ENCODE measurements at regions of chrX and their contacts with region 1.

Region 1: GRCh38 chrX:20382518-20383297 is 116.0 kb upstream of the RPS6KA3 start:
- DNase-seq: peak; percentile 25
- H3K4me3 Mint-ChIP-seq: no peak overlapping the region
- H3K27ac Mint-ChIP-seq: no peak overlapping the region
- H3K4me1 Mint-ChIP-seq: peaks cover 23% of the 10 kb centered on the region
- H3K27me3 Mint-ChIP-seq: no peaks in the 10 kb centered on the region

Region 2: GRCh38 chrX:19893711-19894110 is 489.0 kb before region 1 on chrX:
- CTCF ChIA-PET with region 1: no interaction called
- intact Hi-C with region 1: no loop called
- DNase-seq: no peak
- H3K4me3 Mint-ChIP-seq: no peak overlapping the region
- H3K27ac Mint-ChIP-seq: no peak overlapping the region
- H3K4me1 Mint-ChIP-seq: peaks cover 12% of the 10 kb centered on the region
- H3K27me3 Mint-ChIP-seq: no peaks in the 10 kb centered on the region

Region 3: DNA sequence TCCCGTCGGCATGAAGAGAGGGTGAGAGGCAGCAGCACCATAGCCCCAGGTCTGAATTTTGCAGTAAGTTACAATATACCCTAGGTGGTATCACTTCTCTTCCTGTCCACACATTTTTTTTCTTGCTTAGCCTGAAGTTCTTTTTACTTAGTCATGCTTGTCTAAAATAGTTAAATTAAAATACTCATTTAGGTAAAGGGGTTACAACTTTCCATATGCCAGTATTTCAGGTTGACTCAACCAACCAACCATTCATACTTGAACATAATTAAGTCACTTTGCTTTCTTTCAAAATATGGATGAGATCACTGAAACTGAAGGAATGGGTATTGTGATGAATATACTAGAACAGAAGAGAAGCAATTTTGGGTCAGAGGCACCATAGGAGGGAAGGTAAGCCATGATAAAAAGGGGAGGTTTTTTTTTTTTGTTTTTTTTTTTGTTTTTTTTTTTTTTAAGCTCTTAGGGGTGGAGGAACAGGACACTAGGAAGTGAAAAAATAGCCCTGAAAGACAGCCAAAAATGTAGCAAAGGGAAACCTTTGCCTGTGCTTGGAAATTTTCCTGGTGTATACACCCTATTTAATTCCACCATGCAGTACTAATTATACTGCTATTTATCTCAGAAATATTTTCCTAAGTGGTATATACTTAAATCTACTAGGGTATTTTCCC is 157.8 kb before region 1 on chrX:
- CTCF ChIA-PET with region 1: no interaction called
- intact Hi-C with region 1: loop called (anchors 1 kb)
- DNase-seq: no peak
- H3K4me3 Mint-ChIP-seq: no peak overlapping the region
- H3K27ac Mint-ChIP-seq: no peak overlapping the region
- H3K4me1 Mint-ChIP-seq: peaks cover 37% of the 10 kb centered on the region
- H3K27me3 Mint-ChIP-seq: no peaks in the 10 kb centered on the region

Region 4: GRCh38 chrX:20333672-20334071 is 49.0 kb before region 1 on chrX:
- CTCF ChIA-PET with region 1: interaction called, 5 read pairs
- intact Hi-C with region 1: loop called (anchors 5 kb)
- DNase-seq: peak; percentile 63
- H3K4me3 Mint-ChIP-seq: no peak overlapping the region
- H3K27ac Mint-ChIP-seq: no peak overlapping the region
- H3K4me1 Mint-ChIP-seq: peaks cover 24% of the 10 kb centered on the region
- H3K27me3 Mint-ChIP-seq: no peaks in the 10 kb centered on the region

Region 5: GRCh38 chrX:20372533-20372932 is 10.2 kb before region 1 on chrX:
- CTCF ChIA-PET with region 1: no interaction called
- intact Hi-C with region 1: no loop called
- DNase-seq: no peak
- H3K4me3 Mint-ChIP-seq: no peak overlapping the region
- H3K27ac Mint-ChIP-seq: no peak overlapping the region
- H3K4me1 Mint-ChIP-seq: peaks cover 16% of the 10 kb centered on the region
- H3K27me3 Mint-ChIP-seq: no peaks in the 10 kb centered on the region

Region 6: DNA sequence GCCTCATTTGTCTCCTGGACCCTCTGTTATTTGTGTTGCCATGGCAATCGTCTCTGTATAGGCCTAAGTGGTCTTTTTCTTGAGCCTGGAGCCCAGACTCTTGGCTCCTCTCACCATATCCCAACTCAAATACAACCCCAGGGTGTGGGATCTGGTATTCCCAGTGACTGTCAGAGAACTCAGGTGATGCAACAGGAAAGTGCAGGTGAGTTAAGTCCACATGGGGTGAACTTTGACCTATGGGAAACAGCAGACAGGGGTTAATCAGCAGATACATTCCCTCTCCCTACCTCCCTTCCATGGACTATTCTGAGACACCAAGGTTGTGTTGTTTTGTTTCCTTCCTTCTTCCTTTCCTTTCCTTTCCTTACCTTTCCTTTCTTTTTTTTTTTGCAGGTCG is 14.9 kb after region 1 on chrX:
- CTCF ChIA-PET with region 1: no interaction called
- intact Hi-C with region 1: loop called (anchors 1 kb)
- DNase-seq: no peak
- H3K4me3 Mint-ChIP-seq: no peak overlapping the region
- H3K27ac Mint-ChIP-seq: no peak overlapping the region
- H3K4me1 Mint-ChIP-seq: peaks cover 15% of the 10 kb centered on the region
- H3K27me3 Mint-ChIP-seq: no peaks in the 10 kb centered on the region

Region 7: GRCh38 chrX:20442597-20442996 is 59.9 kb after region 1 on chrX:
- CTCF ChIA-PET with region 1: no interaction called
- intact Hi-C with region 1: loop called (anchors 1 kb)
- DNase-seq: peak; percentile 91
- H3K4me3 Mint-ChIP-seq: no peak overlapping the region
- H3K27ac Mint-ChIP-seq: no peak overlapping the region
- H3K4me1 Mint-ChIP-seq: peaks cover 45% of the 10 kb centered on the region
- H3K27me3 Mint-ChIP-seq: no peaks in the 10 kb centered on the region

Measured in activated naive CD4-positive, alpha-beta T cell treated with anti-CD3 and anti-CD28 coated beads for 36 hours (primary cell).